ENCODE measurements at regions of chr15 and their contacts with region 1.

Region 1: GRCh38 chr15:61051569-61052031 is 177.5 kb downstream of the RORA start:
- DNase-seq: peak; percentile 61
- H3K4me3 ChIP-seq: no peak overlapping the region
- H3K27ac ChIP-seq: no peak overlapping the region
- H3K4me1 ChIP-seq: peaks cover 0 to 22% of the 10 kb centered on the region in 2 experiments; a peak in 2 of 4 replicates
- H3K27me3 ChIP-seq: no peaks in the 10 kb centered on the region
- CTCF ChIP-seq: peak; percentile 81
- EP300 ChIP-seq: no peak
- RAD21 ChIP-seq: peak; percentile 95

Region 2: GRCh38 chr15:60592371-60593169 is 459.0 kb before region 1 on chr15:
- CTCF ChIA-PET with region 1: interaction called, 13 read pairs
- POLR2A ChIA-PET with region 1: no interaction called
- DNase-seq: peak; percentile 88
- H3K4me3 ChIP-seq: peak overlapping the region; percentile 61 to 68
- H3K27ac ChIP-seq: no peak overlapping the region
- H3K4me1 ChIP-seq: peaks cover 0 to 7% of the 10 kb centered on the region in 2 experiments; a peak in 3 of 4 replicates
- H3K27me3 ChIP-seq: peaks cover 10% of the 10 kb centered on the region; the same call in 1 of the 2 replicates
- CTCF ChIP-seq: no peak
- EP300 ChIP-seq: no peak
- RAD21 ChIP-seq: no peak

Region 3: GRCh38 chr15:61025308-61025707 is 26.3 kb before region 1 on chr15:
- CTCF ChIA-PET with region 1: no interaction called
- POLR2A ChIA-PET with region 1: no interaction called
- DNase-seq: no peak
- H3K4me3 ChIP-seq: no peak overlapping the region
- H3K27ac ChIP-seq: peak overlapping the region in 1 of 2 experiments; percentile 23; a peak in 1 of 4 replicates
- H3K4me1 ChIP-seq: no peaks in the 10 kb centered on the region
- H3K27me3 ChIP-seq: no peaks in the 10 kb centered on the region
- CTCF ChIP-seq: 0 out of 2 replicates have a peak, but pooled peaks have one; percentile 7
- EP300 ChIP-seq: no peak
- RAD21 ChIP-seq: no peak

Region 4: DNA sequence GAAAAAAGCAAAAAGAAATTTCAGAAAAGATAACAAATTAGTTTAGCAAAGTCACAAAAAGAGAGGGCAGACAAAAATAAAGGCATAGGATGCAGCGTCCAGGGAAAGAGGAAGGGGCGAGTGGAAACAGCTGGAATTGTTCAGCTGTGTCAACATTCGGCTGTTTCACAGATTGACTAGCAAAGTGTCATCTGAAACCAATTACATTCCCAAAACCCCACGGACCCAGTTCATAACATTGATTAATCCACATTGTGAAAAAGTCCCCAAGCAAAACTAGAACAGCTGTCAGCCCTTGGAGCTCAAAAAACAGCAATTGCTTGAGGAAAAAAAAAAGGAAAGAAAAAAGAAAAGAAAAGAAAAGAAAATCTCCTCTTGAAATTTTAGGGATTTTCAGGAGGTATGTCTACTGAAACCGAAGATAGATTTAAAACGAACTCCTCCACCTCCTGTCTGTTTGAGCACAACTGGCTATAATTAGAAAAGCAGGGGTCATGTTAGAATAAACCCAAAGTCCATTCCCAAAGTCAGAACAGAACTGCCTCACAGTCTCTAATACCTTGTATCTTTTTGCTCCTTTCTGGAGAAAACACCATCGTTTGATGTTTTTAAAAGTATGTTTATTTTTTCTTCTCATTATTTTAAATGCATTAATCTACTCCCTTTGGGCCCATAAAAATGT is 17.9 kb after region 1 on chr15:
- CTCF ChIA-PET with region 1: interaction called, 17 read pairs
- POLR2A ChIA-PET with region 1: no interaction called
- DNase-seq: peak; percentile 74
- H3K4me3 ChIP-seq: no peak overlapping the region
- H3K27ac ChIP-seq: no peak overlapping the region; a peak in 1 of 4 replicates
- H3K4me1 ChIP-seq: peaks cover 0 to 9% of the 10 kb centered on the region in 2 experiments; a peak in 2 of 4 replicates
- H3K27me3 ChIP-seq: no peaks in the 10 kb centered on the region
- CTCF ChIP-seq: no peak
- EP300 ChIP-seq: peak in 1 of 2 experiments; percentile 41; a peak in 1 of 4 replicates
- RAD21 ChIP-seq: no peak

Region 5: GRCh38 chr15:61080221-61081026 is 28.8 kb after region 1 on chr15:
- CTCF ChIA-PET with region 1: interaction called, 11 read pairs
- POLR2A ChIA-PET with region 1: no interaction called
- DNase-seq: no peak
- H3K4me3 ChIP-seq: no peak overlapping the region
- H3K27ac ChIP-seq: no peak overlapping the region
- H3K4me1 ChIP-seq: peaks cover 6 to 19% of the 10 kb centered on the region in 2 experiments; a peak in 3 of 4 replicates
- H3K27me3 ChIP-seq: no peaks in the 10 kb centered on the region
- CTCF ChIP-seq: no peak
- EP300 ChIP-seq: no peak
- RAD21 ChIP-seq: no peak